Posterior cingulate gyrus (tissue), 11 donors: ENCODE measurements at regions of chr16 and their contacts with region 1.

Region 1: GRCh38 chr16:66696669-66697630 is at the start of gene CMTM4:
- DNase-seq: peak; percentile 74 to 98 (median 84)

Region 2: GRCh38 chr16:66660422-66661209 is 36.3 kb before region 1 on chr16:
- intact Hi-C with region 1: loop called (anchors 5 kb)
- DNase-seq: peak; percentile 41 to 94 (median 68)